PC-9 (cell line): ENCODE measurements at regions of chr14 and their contacts with region 1.

Region 1: GRCh38 chr14:93481758-93482157 is 51.0 kb downstream of the UNC79 start:
- DNase-seq: no peak
- H3K4me3 ChIP-seq: no peak overlapping the region
- H3K27ac ChIP-seq: no peak overlapping the region
- H3K4me1 ChIP-seq: no peaks in the 10 kb centered on the region
- H3K27me3 ChIP-seq: peaks cover 33% of the 10 kb centered on the region
- CTCF ChIP-seq: no peak

Region 2: GRCh38 chr14:93456356-93456755 is 25.4 kb before region 1 on chr14:
- CTCF ChIA-PET with region 1: no interaction called
- POLR2A ChIA-PET with region 1: no interaction called
- intact Hi-C with region 1: no loop called
- DNase-seq: no peak
- H3K4me3 ChIP-seq: no peak overlapping the region
- H3K27ac ChIP-seq: no peak overlapping the region
- H3K4me1 ChIP-seq: no peaks in the 10 kb centered on the region
- H3K27me3 ChIP-seq: peaks cover 18% of the 10 kb centered on the region; the same call in 1 of the 2 replicates
- CTCF ChIP-seq: no peak

Region 3: DNA sequence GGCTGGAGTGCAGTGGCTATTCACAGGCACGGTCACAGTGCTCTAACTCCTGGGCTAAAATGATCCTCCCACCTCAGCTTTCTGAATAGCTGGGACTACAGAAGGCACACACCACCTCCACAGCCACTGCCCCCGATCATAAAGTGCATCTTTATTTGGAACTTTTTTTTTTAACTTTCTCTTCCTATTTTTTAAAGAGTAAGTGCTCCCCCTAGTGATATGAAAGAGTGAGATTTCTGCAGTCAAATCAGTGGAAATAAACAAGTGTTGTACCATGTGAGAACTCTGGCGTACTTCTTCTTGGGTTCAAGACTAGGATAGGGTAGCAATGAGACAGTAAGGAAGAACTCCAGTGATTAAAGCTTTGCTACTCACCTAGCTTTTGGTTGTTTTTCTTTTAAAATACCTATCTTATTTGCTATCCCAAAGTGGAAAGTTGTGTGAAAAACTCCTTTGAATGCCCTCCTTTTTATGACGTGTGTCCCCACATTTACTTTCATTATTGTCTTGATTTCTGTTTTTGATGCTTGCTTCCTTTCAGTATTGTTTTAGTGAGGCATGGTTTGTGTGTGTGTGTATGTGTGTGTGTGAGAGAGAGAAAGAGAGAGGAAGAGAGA is 699.0 kb after region 1 on chr14:
- CTCF ChIA-PET with region 1: no interaction called
- POLR2A ChIA-PET with region 1: interaction called, 19 read pairs
- intact Hi-C with region 1: no loop called
- DNase-seq: no peak
- H3K4me3 ChIP-seq: no peak overlapping the region
- H3K27ac ChIP-seq: no peak overlapping the region
- H3K4me1 ChIP-seq: no peaks in the 10 kb centered on the region
- H3K27me3 ChIP-seq: peaks cover 8% of the 10 kb centered on the region; the same call in 1 of the 2 replicates
- CTCF ChIP-seq: peak; percentile 63